Mammary epithelial cell (primary cell): ENCODE measurements at regions of chr20 and their contacts with region 1.

Region 1: GRCh38 chr20:44572541-44573500 is 9.6 kb upstream of the PKIG start:
- DNase-seq: peak; percentile 85
- H3K4me3 ChIP-seq: no peak overlapping the region
- H3K27ac ChIP-seq: peak overlapping the region; percentile 80
- H3K4me1 ChIP-seq: peaks cover 24% of the 10 kb centered on the region
- H3K27me3 ChIP-seq: no peaks in the 10 kb centered on the region
- CTCF ChIP-seq: no peak

Region 2: DNA sequence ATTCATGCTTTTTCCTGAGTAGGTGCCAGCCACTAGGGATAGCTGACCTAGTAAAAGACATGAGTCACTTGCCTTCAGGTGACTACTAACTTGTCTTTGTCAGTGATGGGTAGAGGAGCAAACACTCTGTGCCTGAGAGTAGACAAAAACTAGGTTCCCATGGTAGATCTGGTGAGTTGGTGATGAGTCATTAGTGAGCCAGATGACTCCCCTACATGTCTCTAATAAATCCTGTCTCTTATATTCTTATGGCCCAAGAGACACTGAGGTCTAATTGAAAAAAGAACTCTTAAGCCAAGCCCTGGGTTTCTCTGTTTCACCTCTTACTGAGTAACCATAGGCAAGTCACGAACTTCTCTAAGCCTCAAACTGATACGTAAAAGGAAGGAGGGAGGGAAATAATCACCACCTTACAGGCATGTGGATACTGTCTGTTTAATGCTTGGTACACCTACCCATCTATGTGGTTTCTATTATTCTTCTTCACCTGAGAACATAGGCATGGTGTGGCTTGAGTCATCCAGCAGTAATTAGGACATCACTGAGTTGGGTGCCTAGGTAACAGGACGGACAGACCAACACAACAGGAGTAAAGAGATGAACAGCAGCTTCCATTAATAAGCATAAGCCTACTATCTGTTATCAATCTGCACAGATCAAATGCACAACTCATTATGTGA is 76.9 kb before region 1 on chr20:
- CTCF ChIA-PET with region 1: no interaction called
- dilution Hi-C with region 1: no loop called
- in situ Hi-C with region 1: loop called in 1 of 2 experiments (anchors 5 kb)
- intact Hi-C with region 1: loop called (anchors 1 kb)
- DNase-seq: peak; percentile 99
- H3K4me3 ChIP-seq: no peak overlapping the region
- H3K27ac ChIP-seq: peak overlapping the region; percentile 100
- H3K4me1 ChIP-seq: peaks cover 41% of the 10 kb centered on the region
- H3K27me3 ChIP-seq: no peaks in the 10 kb centered on the region
- CTCF ChIP-seq: no peak

Region 3: GRCh38 chr20:44521484-44522481 is 51.0 kb before region 1 on chr20 and contains the start of gene SERINC3:
- CTCF ChIA-PET with region 1: interaction called, 3 read pairs
- dilution Hi-C with region 1: no loop called
- in situ Hi-C with region 1: no loop called
- intact Hi-C with region 1: loop called (anchors 1 kb)
- DNase-seq: peak; percentile 96
- H3K4me3 ChIP-seq: peak within 1 kb of the TSS; percentile 95 to 99 (median 99)
- H3K27ac ChIP-seq: peak within 1 kb of the TSS; percentile 99
- H3K4me1 ChIP-seq: peaks cover 32% of the 10 kb centered on the region
- H3K27me3 ChIP-seq: no peaks in the 10 kb centered on the region
- CTCF ChIP-seq: peak in 1 of 2 donors; percentile 33
- total RNA-seq, gene SERINC3: 101 to 153 TPM

Region 4: GRCh38 chr20:44532259-44532980 is 40.4 kb before region 1 on chr20:
- CTCF ChIA-PET with region 1: no interaction called
- dilution Hi-C with region 1: no loop called
- in situ Hi-C with region 1: no loop called
- intact Hi-C with region 1: loop called (anchors 2 kb)
- DNase-seq: no peak
- H3K4me3 ChIP-seq: peak overlapping the region; percentile 60 to 82 (median 69)
- H3K27ac ChIP-seq: peak overlapping the region; percentile 50
- H3K4me1 ChIP-seq: peaks cover 9% of the 10 kb centered on the region
- H3K27me3 ChIP-seq: no peaks in the 10 kb centered on the region
- CTCF ChIP-seq: no peak

Region 5: GRCh38 chr20:44733341-44734069 is 160.7 kb after region 1 on chr20:
- CTCF ChIA-PET with region 1: no interaction called
- dilution Hi-C with region 1: no loop called
- in situ Hi-C with region 1: no loop called
- intact Hi-C with region 1: no loop called
- DNase-seq: peak; percentile 57
- H3K4me3 ChIP-seq: no peak overlapping the region
- H3K27ac ChIP-seq: no peak overlapping the region
- H3K4me1 ChIP-seq: peaks cover 32% of the 10 kb centered on the region
- H3K27me3 ChIP-seq: no peaks in the 10 kb centered on the region
- CTCF ChIP-seq: peak; percentile 88 to 92